Ascending aorta (tissue), 2 donors: ENCODE measurements at regions of chr18 and their contacts with region 1.

Region 1: GRCh38 chr18:57737400-57738060 is 65.6 kb downstream of the ATP8B1 start:
- DNase-seq: peak; percentile 75 to 93
- H3K4me3 ChIP-seq: no peak overlapping the region
- H3K27ac ChIP-seq: peak overlapping the region; percentile 58 to 70
- H3K4me1 ChIP-seq: peaks cover 0 to 23% of the 10 kb centered on the region in 2 donors
- H3K27me3 ChIP-seq: no peaks in the 10 kb centered on the region
- CTCF ChIP-seq: no peak

Region 2: DNA sequence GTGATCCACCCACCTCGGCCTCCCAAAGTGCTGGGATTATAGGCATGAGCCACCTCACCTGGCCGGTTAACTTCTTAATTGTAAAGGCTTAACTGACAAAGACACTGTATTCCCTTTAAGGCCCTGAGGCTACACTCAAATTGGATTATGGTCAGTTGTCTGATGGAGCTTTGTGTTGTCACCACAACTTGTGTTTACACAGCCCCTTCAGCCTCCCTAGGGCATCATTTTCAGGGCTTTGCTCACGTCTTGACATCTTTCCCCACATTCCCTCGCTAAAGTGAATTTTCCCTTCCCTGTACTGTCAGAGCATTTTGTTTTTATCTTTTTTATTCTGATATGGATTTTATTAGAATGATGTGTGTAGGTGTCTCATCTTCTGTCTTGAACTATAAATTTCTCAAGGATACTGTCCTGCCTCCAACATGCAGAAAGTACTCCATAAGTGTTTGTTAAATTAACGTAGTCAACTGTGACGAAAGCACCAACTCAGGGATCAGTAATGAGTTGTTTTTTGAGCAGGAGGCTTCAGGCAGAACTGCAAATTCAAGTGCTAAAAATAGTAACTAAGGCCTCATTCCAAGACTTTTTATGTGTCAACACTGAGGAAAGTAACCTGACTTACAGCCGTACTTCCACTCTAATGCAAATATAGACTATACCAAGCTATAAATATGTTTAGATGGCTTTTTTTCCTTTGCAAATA is 38.8 kb before region 1 on chr18:
- intact Hi-C with region 1: loop called (anchors 5 kb)
- DNase-seq: no peak
- H3K4me3 ChIP-seq: peak overlapping the region in 1 of 2 donors; percentile 2
- H3K27ac ChIP-seq: peak overlapping the region; percentile 73 to 81
- H3K4me1 ChIP-seq: peaks cover 0 to 12% of the 10 kb centered on the region in 2 donors
- H3K27me3 ChIP-seq: no peaks in the 10 kb centered on the region
- CTCF ChIP-seq: no peak